Activated T-helper 1 cell treated with anti-CD3 and anti-CD28 coated beads, Interleukin-12 subunit alpha, Interleukin-12 subunit beta, Interleukin-2, Interleukin-4 antibody, amounts not matched to agents 30 ng/mL and 10 ng/mL and 1 ng/mL, durations not matched to agents 14 hours and 24 hours and 36 hours (primary cell): ENCODE measurements at regions of chr15 and their contacts with region 1.

Region 1: GRCh38 chr15:38554354-38554753 is 10.3 kb downstream of the RASGRP1 start:
- DNase-seq: no peak
- H3K4me3 Mint-ChIP-seq: peak overlapping the region; percentile 96
- H3K27ac Mint-ChIP-seq: peak overlapping the region; percentile 93
- H3K4me1 Mint-ChIP-seq: peaks cover 87% of the 10 kb centered on the region
- H3K27me3 Mint-ChIP-seq: no peaks in the 10 kb centered on the region

Region 2: GRCh38 chr15:37824717-37825382 is 729.5 kb before region 1 on chr15:
- intact Hi-C with region 1: no loop called
- DNase-seq: no peak
- H3K4me3 Mint-ChIP-seq: no peak overlapping the region
- H3K27ac Mint-ChIP-seq: no peak overlapping the region
- H3K4me1 Mint-ChIP-seq: no peaks in the 10 kb centered on the region
- H3K27me3 Mint-ChIP-seq: peaks cover 3% of the 10 kb centered on the region

Region 3: DNA sequence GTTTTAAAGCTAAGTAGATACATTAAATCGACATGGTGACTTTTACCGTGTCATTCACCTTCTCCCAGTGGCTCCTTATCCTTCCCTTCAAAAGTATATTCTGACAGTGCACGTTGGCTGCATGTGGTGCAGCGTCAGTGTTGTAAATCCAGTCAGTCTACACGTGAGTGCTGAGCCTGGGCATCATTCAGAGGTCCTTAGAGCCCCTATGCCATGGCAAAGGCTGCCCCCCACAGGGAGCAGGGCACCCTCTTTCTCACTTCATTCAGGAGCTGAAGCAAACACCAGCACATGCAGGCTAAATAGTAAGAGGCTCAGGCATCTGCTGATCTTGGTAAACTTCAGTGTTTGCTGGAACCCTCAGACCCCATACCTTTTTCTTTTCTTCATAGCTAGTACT is 33.0 kb before region 1 on chr15:
- intact Hi-C with region 1: loop called (anchors 5 kb)
- DNase-seq: no peak
- H3K4me3 Mint-ChIP-seq: no peak overlapping the region
- H3K27ac Mint-ChIP-seq: no peak overlapping the region
- H3K4me1 Mint-ChIP-seq: peaks cover 51% of the 10 kb centered on the region
- H3K27me3 Mint-ChIP-seq: no peaks in the 10 kb centered on the region

Region 4: GRCh38 chr15:38538372-38539343 is 15.7 kb before region 1 on chr15:
- intact Hi-C with region 1: loop called (anchors 1 kb)
- DNase-seq: no peak
- H3K4me3 Mint-ChIP-seq: peak overlapping the region; percentile 38
- H3K27ac Mint-ChIP-seq: peak overlapping the region; percentile 80
- H3K4me1 Mint-ChIP-seq: peaks cover 94% of the 10 kb centered on the region
- H3K27me3 Mint-ChIP-seq: no peaks in the 10 kb centered on the region

Region 5: GRCh38 chr15:38564557-38565283 is 10.4 kb after region 1 on chr15 and contains the start of gene RASGRP1:
- intact Hi-C with region 1: no loop called
- DNase-seq: peak; percentile 81
- H3K4me3 Mint-ChIP-seq: peak within 1 kb of the TSS; percentile 96
- H3K27ac Mint-ChIP-seq: peak within 1 kb of the TSS; percentile 98
- H3K4me1 Mint-ChIP-seq: peaks cover 53% of the 10 kb centered on the region
- H3K27me3 Mint-ChIP-seq: peaks cover 2% of the 10 kb centered on the region
- total RNA-seq, gene RASGRP1: 106 and 110 TPM in 2 replicates